PC-3 (cell line): ENCODE measurements at regions of chr2 and their contacts with region 1.

Region 1: DNA sequence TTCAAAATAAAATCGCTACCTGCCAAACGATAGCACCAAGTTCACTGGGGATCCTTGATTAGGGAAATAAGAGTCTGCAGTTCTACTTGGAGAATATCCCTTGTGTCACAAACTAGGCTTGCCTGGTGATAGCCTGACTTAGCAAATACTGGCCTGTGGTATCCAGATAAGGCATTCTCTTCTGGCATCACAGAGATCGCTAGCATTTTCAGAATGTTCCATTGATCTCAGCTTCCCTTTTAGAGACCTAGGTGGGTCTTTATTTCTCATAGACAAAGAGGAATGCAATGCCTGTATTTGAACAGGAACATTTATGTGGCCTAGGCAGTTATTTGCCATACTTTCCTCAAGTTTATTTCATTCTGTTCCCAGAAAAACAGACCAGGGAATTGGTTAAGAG is 349.1 kb downstream of the STK39 start:
- DNase-seq: no peak
- ATAC-seq: no peak
- H3K4me3 ChIP-seq: no peak overlapping the region
- H3K27ac ChIP-seq: no peak overlapping the region
- H3K4me1 ChIP-seq: no peaks in the 10 kb centered on the region
- H3K27me3 ChIP-seq: peaks cover 30% of the 10 kb centered on the region
- CTCF ChIP-seq: no peak

Region 2: DNA sequence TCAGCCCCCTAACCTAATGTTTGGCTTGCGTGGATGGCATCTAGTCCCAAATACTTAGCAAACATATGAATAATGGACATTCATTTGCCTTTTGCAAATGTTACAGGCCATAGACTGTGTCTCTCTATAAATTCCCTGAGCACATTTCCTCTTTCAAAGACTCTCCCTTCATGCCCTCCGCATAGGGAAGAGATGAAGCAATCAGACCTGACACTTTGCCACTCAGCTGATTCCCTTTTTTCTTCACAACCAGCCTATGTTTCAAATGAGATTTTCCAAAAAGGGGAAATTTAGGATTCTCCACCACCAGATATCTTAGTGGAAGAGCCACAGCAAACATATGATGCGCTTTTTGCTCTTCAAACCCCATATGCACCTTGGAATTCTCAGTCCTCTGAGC is 104.6 kb before region 1 on chr2:
- CTCF ChIA-PET with region 1: no interaction called
- POLR2A ChIA-PET with region 1: no interaction called
- intact Hi-C with region 1: no loop called
- DNase-seq: no peak
- ATAC-seq: no peak
- H3K4me3 ChIP-seq: no peak overlapping the region
- H3K27ac ChIP-seq: no peak overlapping the region
- H3K4me1 ChIP-seq: no peaks in the 10 kb centered on the region
- H3K27me3 ChIP-seq: peaks cover 40% of the 10 kb centered on the region
- CTCF ChIP-seq: no peak

Region 3: DNA sequence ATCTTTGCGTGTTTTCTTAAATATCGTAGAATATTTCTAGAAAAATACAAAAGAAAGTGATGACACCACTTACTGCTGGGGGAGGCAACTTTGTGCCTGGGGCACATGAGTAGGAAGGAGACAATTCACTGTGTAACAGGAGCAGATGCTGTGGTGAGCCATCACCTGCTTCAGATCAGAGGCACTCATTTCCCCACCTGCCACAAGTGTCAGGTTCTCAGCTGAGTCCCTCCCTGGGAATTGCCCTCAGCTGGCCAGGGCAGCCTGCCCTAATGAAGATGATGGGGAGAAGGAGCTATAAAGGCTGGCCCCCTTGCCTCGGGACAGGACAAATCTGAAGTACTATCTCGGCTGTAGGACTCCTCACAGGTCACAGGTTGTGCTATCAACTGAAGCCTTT is 26.2 kb after region 1 on chr2:
- CTCF ChIA-PET with region 1: no interaction called
- POLR2A ChIA-PET with region 1: no interaction called
- intact Hi-C with region 1: no loop called
- DNase-seq: peak; percentile 9
- ATAC-seq: 0 out of 2 replicates have a peak, but pooled peaks have one; percentile 33
- H3K4me3 ChIP-seq: no peak overlapping the region
- H3K27ac ChIP-seq: no peak overlapping the region
- H3K4me1 ChIP-seq: 0 out of 2 replicates have a peak, but pooled peaks cover 5% of the 10 kb centered on the region
- H3K27me3 ChIP-seq: peaks cover 16% of the 10 kb centered on the region
- CTCF ChIP-seq: no peak

Region 4: GRCh38 chr2:167943897-167944296 is 45.6 kb after region 1 on chr2:
- CTCF ChIA-PET with region 1: no interaction called
- POLR2A ChIA-PET with region 1: interaction called, 21 read pairs
- intact Hi-C with region 1: no loop called
- DNase-seq: peak; percentile 14
- ATAC-seq: peak; percentile 47
- H3K4me3 ChIP-seq: no peak overlapping the region
- H3K27ac ChIP-seq: no peak overlapping the region
- H3K4me1 ChIP-seq: no peaks in the 10 kb centered on the region; the same call in 1 of the 2 replicates
- H3K27me3 ChIP-seq: peaks cover 11% of the 10 kb centered on the region
- CTCF ChIP-seq: no peak

Region 5: GRCh38 chr2:167964650-167965413 is 66.5 kb after region 1 on chr2:
- CTCF ChIA-PET with region 1: no interaction called
- POLR2A ChIA-PET with region 1: no interaction called
- intact Hi-C with region 1: no loop called
- DNase-seq: peak; percentile 35
- ATAC-seq: no peak
- H3K4me3 ChIP-seq: no peak overlapping the region
- H3K27ac ChIP-seq: no peak overlapping the region
- H3K4me1 ChIP-seq: no peaks in the 10 kb centered on the region
- H3K27me3 ChIP-seq: no peaks in the 10 kb centered on the region
- CTCF ChIP-seq: peak; percentile 56